ENCODE measurements at regions of chr6 and their contacts with region 1.

Region 1: GRCh38 chr6:39114704-39115599 is at the start of gene SAYSD1:
- DNase-seq: peak; percentile 96
- ATAC-seq: peak; percentile 77
- H3K4me3 Mint-ChIP-seq: peak within 1 kb of the TSS; percentile 85
- H3K27ac Mint-ChIP-seq: peak within 1 kb of the TSS; percentile 98
- H3K4me1 Mint-ChIP-seq: peaks cover 63% of the 10 kb centered on the region
- H3K27me3 Mint-ChIP-seq: no peaks in the 10 kb centered on the region
- total RNA-seq, gene SAYSD1: 14.1 to 16.7 TPM

Region 2: DNA sequence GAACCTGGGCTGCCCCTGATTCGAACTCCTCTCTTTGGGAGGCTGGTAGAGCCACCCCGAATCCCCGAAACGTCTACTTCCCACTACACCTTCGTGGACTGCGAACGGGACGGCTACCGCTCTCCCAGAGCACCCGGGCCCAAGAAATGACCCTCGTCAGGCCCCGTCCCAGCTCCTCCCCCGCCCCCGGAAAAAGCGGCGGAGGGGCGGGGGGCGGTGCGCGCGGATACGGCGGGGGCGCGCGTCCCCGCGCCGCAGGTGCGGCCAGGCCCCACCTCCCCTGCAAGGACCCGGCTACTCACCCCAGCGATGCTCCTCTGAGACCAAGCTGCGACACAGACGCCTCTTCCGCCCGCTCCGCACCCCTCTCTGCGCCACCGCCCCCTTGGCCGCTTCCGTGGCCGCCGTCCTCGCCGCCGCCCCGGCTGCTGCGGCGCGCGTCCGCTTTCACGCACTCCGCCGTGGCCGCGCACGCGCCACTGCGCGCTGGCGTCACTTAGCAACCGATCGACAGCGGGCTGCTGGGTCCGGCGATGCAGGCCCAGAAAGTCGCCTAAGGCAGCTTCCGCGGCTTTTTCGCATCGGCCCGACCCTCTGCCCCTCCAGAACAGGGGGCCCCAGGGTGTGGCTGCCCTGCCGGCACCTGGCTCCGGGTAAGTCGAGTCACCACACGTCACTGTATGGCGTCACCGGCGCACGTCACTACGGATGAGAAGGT is 475.3 kb before region 1 on chr6 and contains the start of gene BTBD9:
- CTCF ChIA-PET with region 1: no interaction called
- POLR2A ChIA-PET with region 1: no interaction called
- intact Hi-C with region 1: loop called in 1 of 2 experiments (anchors 2 kb)
- DNase-seq: peak; percentile 89
- ATAC-seq: peak; percentile 71
- H3K4me3 Mint-ChIP-seq: peak within 1 kb of the TSS; percentile 82
- H3K27ac Mint-ChIP-seq: peak within 1 kb of the TSS; percentile 82
- H3K4me1 Mint-ChIP-seq: peaks cover 40% of the 10 kb centered on the region
- H3K27me3 Mint-ChIP-seq: no peaks in the 10 kb centered on the region
- total RNA-seq, gene BTBD9: 8.2 to 12.2 TPM

Region 3: DNA sequence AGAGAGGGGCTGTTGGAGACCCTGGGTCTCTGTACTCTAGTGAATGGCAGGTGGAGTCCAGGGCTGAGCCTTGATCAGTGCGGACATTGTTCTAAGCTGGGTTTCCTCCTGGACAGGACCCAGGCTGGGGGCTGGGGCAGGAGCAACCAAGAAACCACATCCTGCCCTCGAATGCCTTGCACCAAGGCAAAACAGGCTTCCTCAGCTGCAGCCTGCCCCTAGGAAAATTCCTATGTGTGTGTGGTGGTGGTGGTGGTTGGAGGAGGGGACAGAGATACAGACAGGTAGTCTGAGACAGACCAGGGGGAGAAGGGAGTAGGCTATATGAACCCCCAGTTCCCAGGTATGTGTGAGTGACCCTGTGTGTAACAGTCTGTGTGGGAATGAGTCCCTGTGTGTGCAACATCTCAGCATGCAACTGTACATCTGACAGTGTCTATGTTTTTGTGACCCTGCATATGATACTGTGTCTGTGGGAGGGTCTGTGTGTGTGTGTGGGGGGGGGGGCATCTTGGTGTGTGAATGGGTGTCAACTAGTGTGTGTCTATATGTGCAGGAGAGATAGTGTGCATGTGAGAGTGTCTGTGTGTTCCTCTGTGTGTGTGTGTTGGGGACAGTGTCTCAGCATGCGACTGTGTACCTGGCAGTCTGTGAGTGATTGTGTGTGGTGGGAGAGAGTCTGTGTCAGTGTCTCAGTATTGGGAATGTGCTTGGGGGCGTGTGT is 63.4 kb before region 1 on chr6:
- CTCF ChIA-PET with region 1: interaction called, 3 read pairs
- POLR2A ChIA-PET with region 1: no interaction called
- intact Hi-C with region 1: loop called in 1 of 2 experiments (anchors 5 kb)
- DNase-seq: no peak
- ATAC-seq: no peak
- H3K4me3 Mint-ChIP-seq: no peak overlapping the region
- H3K27ac Mint-ChIP-seq: no peak overlapping the region
- H3K4me1 Mint-ChIP-seq: peaks cover 29% of the 10 kb centered on the region
- H3K27me3 Mint-ChIP-seq: peaks cover 37% of the 10 kb centered on the region

Region 4: GRCh38 chr6:39075010-39075686 is 39.8 kb before region 1 on chr6:
- CTCF ChIA-PET with region 1: no interaction called
- POLR2A ChIA-PET with region 1: no interaction called
- intact Hi-C with region 1: no loop called
- DNase-seq: no peak
- ATAC-seq: no peak
- H3K4me3 Mint-ChIP-seq: no peak overlapping the region
- H3K27ac Mint-ChIP-seq: no peak overlapping the region
- H3K4me1 Mint-ChIP-seq: peaks cover 6% of the 10 kb centered on the region
- H3K27me3 Mint-ChIP-seq: peaks cover 3% of the 10 kb centered on the region

Region 5: DNA sequence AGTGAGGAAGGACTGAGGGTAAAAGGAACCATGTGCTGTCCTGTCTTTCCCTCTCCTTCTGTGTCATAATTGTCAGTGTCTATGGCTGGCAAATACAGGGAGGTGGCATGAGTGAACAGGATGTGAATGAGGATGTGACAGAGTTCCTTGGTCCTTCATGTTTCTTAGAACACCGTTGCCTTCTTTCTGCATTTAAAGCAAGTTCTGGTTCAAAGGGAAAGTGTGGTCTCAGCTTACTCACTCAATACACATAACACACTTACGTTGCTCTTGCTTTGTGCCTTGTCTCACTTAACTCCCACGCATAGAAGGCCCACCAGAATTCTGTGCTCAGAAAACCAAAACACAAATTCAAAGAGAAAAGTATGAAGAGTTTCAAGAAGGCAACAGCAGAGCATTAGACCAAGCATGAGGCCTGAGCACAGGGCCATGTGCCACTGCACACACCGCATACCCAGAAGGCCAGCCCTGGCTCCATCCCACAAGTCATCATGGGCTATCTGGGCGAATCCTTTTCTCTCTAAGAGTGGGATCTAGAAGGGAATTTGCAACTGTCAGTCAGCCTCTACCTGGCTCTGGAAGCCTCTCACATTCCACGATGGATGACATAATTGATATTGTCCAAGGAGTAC is 38.9 kb after region 1 on chr6:
- CTCF ChIA-PET with region 1: interaction called, 8 read pairs
- POLR2A ChIA-PET with region 1: interaction called, 3 read pairs
- intact Hi-C with region 1: loop called (anchors 1 kb)
- DNase-seq: peak; percentile 63
- ATAC-seq: peak; percentile 94
- H3K4me3 Mint-ChIP-seq: no peak overlapping the region
- H3K27ac Mint-ChIP-seq: peak overlapping the region; percentile 84
- H3K4me1 Mint-ChIP-seq: peaks cover 52% of the 10 kb centered on the region
- H3K27me3 Mint-ChIP-seq: peaks cover 10% of the 10 kb centered on the region

Region 6: DNA sequence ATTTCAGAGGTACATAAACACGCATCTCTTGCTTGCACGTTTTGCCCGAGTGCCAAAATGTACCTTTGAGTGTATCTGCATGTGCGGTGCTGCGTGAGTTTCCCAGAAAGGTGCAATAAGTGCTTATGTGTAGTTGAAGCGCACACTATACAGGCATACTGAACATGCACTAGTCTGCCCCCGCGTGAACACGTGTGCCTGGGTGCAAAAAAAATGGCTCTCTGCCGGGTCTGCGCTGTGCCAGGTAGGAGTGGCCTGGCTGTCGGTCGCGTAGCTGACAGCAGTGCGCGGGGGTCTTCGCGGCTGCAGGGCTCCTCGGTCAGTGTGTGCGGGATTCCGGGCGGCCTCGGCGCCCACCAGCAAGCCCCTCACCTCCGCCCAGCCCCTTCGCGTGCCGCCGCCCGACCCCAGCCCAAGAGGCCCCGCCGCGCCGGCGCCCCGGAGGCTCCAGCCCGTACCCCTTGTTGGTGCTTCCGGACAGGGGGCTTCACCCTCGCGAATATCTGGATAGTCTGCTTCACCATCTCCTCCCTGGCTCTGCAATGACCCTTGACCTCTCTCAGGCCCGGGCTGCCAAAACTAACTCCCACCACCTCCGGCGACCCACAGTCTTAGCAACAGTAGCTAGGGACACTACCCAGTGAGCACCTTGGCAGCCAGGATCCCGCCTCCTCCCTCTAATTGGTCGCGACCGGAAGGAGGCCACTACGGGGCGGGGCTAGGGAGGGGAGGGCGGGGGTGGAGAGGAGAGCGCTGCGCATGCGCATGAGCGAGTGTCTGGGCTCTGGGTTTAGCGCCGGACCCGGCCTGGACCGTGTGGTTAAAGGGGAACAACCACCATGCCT is 610.1 kb after region 1 on chr6 and contains the start of gene KIF6:
- CTCF ChIA-PET with region 1: no interaction called
- POLR2A ChIA-PET with region 1: no interaction called
- intact Hi-C with region 1: loop called in 1 of 2 experiments (anchors 10 kb)
- DNase-seq: peak; percentile 92
- ATAC-seq: peak; percentile 100
- H3K4me3 Mint-ChIP-seq: peak within 1 kb of the TSS; percentile 90
- H3K27ac Mint-ChIP-seq: peak within 1 kb of the TSS; percentile 60
- H3K4me1 Mint-ChIP-seq: peaks cover 3% of the 10 kb centered on the region
- H3K27me3 Mint-ChIP-seq: peaks cover 5% of the 10 kb centered on the region
- total RNA-seq, gene KIF6: 0.43 to 0.49 TPM